B cell (primary cell): ENCODE measurements at regions of chr18 and their contacts with region 1.

Region 1: GRCh38 chr18:23412351-23412964 is 40.6 kb upstream of the RIOK3 start:
- DNase-seq: no peak
- ATAC-seq: no peak
- H3K4me3 ChIP-seq: no peak overlapping the region
- H3K4me3 Mint-ChIP-seq: no peak overlapping the region
- H3K27ac ChIP-seq: no peak overlapping the region
- H3K27ac Mint-ChIP-seq: no peak overlapping the region
- H3K4me1 ChIP-seq: peaks cover 0 to 3% of the 10 kb centered on the region in 2 donors
- H3K4me1 Mint-ChIP-seq: peaks cover 5% of the 10 kb centered on the region
- H3K27me3 ChIP-seq: no peaks in the 10 kb centered on the region
- H3K27me3 Mint-ChIP-seq: no peaks in the 10 kb centered on the region
- CTCF ChIP-seq: no peak

Region 2: GRCh38 chr18:22800551-22800951 is 611.9 kb before region 1 on chr18:
- CTCF ChIA-PET with region 1: interaction called, 40 read pairs
- POLR2A ChIA-PET with region 1: no interaction called
- intact Hi-C with region 1: loop called (anchors 1 kb)
- DNase-seq: no peak
- ATAC-seq: no peak
- H3K4me3 ChIP-seq: no peak overlapping the region
- H3K4me3 Mint-ChIP-seq: no peak overlapping the region
- H3K27ac ChIP-seq: no peak overlapping the region
- H3K27ac Mint-ChIP-seq: no peak overlapping the region
- H3K4me1 ChIP-seq: no peaks in the 10 kb centered on the region
- H3K4me1 Mint-ChIP-seq: no peaks in the 10 kb centered on the region
- H3K27me3 ChIP-seq: peaks cover 0 to 2% (median 0%) of the 10 kb centered on the region in 4 experiments
- H3K27me3 Mint-ChIP-seq: no peaks in the 10 kb centered on the region
- CTCF ChIP-seq: no peak

Region 3: DNA sequence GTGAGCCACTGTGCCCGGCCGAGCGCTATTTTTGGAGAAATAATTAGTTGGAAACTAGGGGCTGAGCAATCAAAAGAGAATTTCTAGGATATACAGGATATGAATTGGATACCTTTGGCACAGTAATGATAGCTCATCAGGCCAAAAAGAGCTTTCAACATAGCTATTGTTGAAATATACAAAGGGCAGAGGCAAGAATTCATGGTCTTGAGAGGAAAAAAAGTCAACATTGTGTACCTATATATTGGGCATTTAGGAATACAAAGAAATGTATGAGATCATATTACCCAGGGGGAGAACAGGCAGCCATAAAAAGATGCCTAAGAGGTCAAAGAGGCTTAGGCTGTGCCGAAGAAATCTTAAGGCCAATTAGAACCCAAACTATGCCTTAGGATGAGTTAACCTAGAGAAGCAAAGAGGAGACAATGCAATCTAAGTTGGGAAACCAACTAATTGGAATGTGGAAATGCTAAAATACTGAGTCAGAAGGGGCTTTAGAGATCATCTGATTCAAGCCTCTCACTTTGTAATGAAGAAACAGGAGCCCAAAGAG is 380.4 kb before region 1 on chr18:
- CTCF ChIA-PET with region 1: interaction called, 22 read pairs
- POLR2A ChIA-PET with region 1: no interaction called
- intact Hi-C with region 1: loop called (anchors 5 kb)
- DNase-seq: no peak
- ATAC-seq: no peak
- H3K4me3 ChIP-seq: no peak overlapping the region
- H3K4me3 Mint-ChIP-seq: no peak overlapping the region
- H3K27ac ChIP-seq: no peak overlapping the region
- H3K27ac Mint-ChIP-seq: no peak overlapping the region
- H3K4me1 ChIP-seq: no peaks in the 10 kb centered on the region
- H3K4me1 Mint-ChIP-seq: no peaks in the 10 kb centered on the region
- H3K27me3 ChIP-seq: no peaks in the 10 kb centered on the region
- H3K27me3 Mint-ChIP-seq: no peaks in the 10 kb centered on the region
- CTCF ChIP-seq: no peak

Region 4: DNA sequence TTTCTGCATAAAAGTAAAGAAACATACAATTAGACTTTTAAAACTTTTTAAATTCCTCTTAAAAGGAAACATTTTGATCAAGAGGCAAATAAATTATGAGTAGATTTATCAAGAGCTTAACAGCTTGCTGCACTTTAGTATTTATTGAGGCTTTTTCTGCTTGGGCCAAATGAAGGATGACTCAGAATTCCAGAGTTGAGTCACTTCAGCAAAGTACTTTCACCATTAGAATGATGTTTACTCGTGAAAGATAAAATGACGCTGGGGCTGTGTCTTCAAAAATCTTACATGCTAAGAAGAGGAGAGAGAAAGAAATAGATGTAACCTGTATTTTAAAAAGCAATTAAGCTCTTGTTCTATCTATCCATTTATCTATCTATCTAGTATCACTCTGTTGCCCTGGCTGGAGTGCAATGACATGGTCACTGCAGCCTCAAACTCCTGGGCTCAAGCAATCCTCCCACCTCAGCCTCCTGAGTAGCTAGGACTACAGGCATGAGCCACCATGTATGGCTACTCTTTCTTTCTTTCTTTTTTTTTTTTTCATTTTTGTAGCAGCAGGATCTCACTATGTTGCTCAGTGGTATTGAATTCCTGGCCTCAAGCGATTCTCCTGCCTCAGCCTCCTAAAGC is 34.7 kb before region 1 on chr18:
- CTCF ChIA-PET with region 1: interaction called, 20 read pairs
- POLR2A ChIA-PET with region 1: no interaction called
- intact Hi-C with region 1: no loop called
- DNase-seq: no peak
- ATAC-seq: no peak
- H3K4me3 ChIP-seq: no peak overlapping the region
- H3K4me3 Mint-ChIP-seq: no peak overlapping the region
- H3K27ac ChIP-seq: no peak overlapping the region
- H3K27ac Mint-ChIP-seq: no peak overlapping the region
- H3K4me1 ChIP-seq: no peaks in the 10 kb centered on the region
- H3K4me1 Mint-ChIP-seq: no peaks in the 10 kb centered on the region
- H3K27me3 ChIP-seq: no peaks in the 10 kb centered on the region
- H3K27me3 Mint-ChIP-seq: no peaks in the 10 kb centered on the region
- CTCF ChIP-seq: no peak

Region 5: DNA sequence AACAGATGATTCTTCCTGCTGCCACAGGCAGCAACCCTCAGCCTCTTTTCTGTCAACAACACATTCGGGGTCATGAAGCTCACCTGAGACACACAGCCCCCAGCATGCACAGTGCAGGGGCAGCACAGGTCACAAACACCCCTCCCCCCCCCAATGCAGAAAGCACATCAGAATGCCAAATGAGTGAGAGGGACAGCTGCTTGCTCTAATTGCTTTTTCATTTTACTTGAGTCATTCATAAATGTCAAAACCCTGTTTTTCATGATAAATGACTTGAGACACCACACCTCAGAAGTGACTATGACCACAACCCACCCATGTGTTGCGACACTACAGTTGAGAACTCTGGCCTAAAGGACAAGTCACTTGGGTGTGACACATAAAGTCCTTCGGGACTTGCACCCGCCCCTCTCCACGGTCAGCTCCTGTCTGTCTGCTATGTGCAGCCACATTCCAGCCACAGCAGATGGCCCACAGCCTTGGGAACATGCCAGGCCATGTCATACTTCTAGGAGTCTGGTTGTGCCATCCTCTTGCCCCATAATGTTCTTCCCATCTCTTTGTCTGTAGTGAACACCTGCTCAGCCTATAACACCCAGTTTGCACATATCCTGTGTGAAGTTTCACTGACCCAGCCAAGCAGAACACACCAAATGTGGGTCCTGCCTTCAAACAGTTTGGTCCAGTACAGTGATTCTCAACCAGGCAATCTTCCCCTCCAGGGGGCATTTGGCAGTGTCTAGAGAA is 10.4 kb after region 1 on chr18:
- CTCF ChIA-PET with region 1: interaction called, 11 read pairs
- POLR2A ChIA-PET with region 1: no interaction called
- intact Hi-C with region 1: no loop called
- DNase-seq: peak; percentile 55
- ATAC-seq: peak; percentile 87
- H3K4me3 ChIP-seq: peak overlapping the region in 1 of 5 experiments; percentile 38
- H3K4me3 Mint-ChIP-seq: peak overlapping the region; percentile 75
- H3K27ac ChIP-seq: peak overlapping the region; percentile 13 to 46
- H3K27ac Mint-ChIP-seq: peak overlapping the region; percentile 86
- H3K4me1 ChIP-seq: peaks cover 23 to 28% of the 10 kb centered on the region in 2 donors
- H3K4me1 Mint-ChIP-seq: peaks cover 30% of the 10 kb centered on the region
- H3K27me3 ChIP-seq: no peaks in the 10 kb centered on the region
- H3K27me3 Mint-ChIP-seq: no peaks in the 10 kb centered on the region
- CTCF ChIP-seq: no peak

Region 6: DNA sequence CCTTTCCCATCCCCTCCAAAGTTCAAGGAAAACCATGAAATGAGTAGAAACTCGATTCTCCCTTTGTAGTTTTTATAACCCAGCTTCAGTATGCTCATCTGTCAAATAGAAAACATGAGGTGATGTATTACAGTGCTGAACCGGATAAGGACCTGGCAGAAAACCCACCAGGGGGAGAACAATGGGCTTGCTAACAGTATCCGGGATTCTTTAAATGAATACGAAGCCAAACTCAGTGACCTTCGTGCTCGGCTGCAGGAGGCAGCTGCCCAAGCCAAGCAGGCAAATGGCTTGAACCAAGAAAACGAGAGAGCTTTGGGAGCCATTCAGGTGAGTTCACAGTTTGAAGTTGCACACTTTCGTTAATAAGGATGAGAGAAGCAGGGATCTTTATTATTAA is 488.5 kb after region 1 on chr18:
- CTCF ChIA-PET with region 1: no interaction called
- POLR2A ChIA-PET with region 1: no interaction called
- intact Hi-C with region 1: no loop called
- DNase-seq: no peak
- ATAC-seq: no peak
- H3K4me3 ChIP-seq: no peak overlapping the region
- H3K4me3 Mint-ChIP-seq: no peak overlapping the region
- H3K27ac ChIP-seq: no peak overlapping the region
- H3K27ac Mint-ChIP-seq: no peak overlapping the region
- H3K4me1 ChIP-seq: no peaks in the 10 kb centered on the region
- H3K4me1 Mint-ChIP-seq: no peaks in the 10 kb centered on the region
- H3K27me3 ChIP-seq: no peaks in the 10 kb centered on the region
- H3K27me3 Mint-ChIP-seq: peaks cover 5% of the 10 kb centered on the region
- CTCF ChIP-seq: no peak

Region 7: GRCh38 chr18:24170389-24170788 is 757.9 kb after region 1 on chr18:
- CTCF ChIA-PET with region 1: no interaction called
- POLR2A ChIA-PET with region 1: no interaction called
- intact Hi-C with region 1: no loop called
- DNase-seq: no peak
- ATAC-seq: no peak
- H3K4me3 ChIP-seq: no peak overlapping the region
- H3K4me3 Mint-ChIP-seq: no peak overlapping the region
- H3K27ac ChIP-seq: no peak overlapping the region
- H3K27ac Mint-ChIP-seq: no peak overlapping the region
- H3K4me1 ChIP-seq: no peaks in the 10 kb centered on the region
- H3K4me1 Mint-ChIP-seq: no peaks in the 10 kb centered on the region
- H3K27me3 ChIP-seq: peaks cover 0 to 3% (median 0%) of the 10 kb centered on the region in 4 experiments
- H3K27me3 Mint-ChIP-seq: peaks cover 5% of the 10 kb centered on the region
- CTCF ChIP-seq: no peak